ENCODE measurements at regions of chr17 and their contacts with region 1.

Region 1: DNA sequence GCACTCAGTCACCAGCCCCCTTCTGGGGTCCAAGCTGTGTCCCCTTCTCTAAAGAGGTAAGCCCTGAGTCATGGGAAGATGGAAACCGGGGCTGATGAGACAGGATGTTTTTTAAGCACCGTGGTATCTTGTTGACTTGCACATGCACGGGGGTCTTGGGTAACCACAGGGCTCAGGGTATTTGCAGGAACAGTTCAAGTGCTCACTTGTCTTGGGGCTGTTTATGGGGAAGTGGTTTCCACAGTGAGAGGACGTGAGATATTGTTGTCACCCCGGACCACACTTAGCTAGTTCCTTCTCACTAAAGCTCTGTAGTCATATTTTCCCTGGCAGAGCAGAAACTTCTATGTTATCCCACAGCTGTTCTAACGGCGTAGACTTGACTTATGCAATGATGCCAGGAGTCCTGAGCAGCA is 7.7 kb downstream of the CCL3L1 start:
- DNase-seq: peak in 3 of 5 donors; percentile 54 to 93 (median 72)
- H3K4me3 ChIP-seq: no peak overlapping the region
- H3K4me3 Mint-ChIP-seq: peak overlapping the region; percentile 56 to 99 (median 95)
- H3K27ac ChIP-seq: peak overlapping the region; percentile 61
- H3K27ac Mint-ChIP-seq: peak overlapping the region; percentile 71 to 100 (median 89)
- H3K4me1 ChIP-seq: peaks cover 35% of the 10 kb centered on the region
- H3K4me1 Mint-ChIP-seq: peaks cover 49 to 87% (median 86%) of the 10 kb centered on the region in 3 donors
- H3K27me3 ChIP-seq: no peaks in the 10 kb centered on the region
- H3K27me3 Mint-ChIP-seq: peaks cover 0 to 19% of the 10 kb centered on the region in 2 donors

Region 2: GRCh38 chr17:36198831-36199465 is 10.0 kb after region 1 on chr17:
- CTCF ChIA-PET with region 1: interaction called, 11 read pairs
- POLR2A ChIA-PET with region 1: interaction called, 130 read pairs
- DNase-seq: peak in 1 of 5 donors; percentile 69
- H3K4me3 ChIP-seq: no peak overlapping the region
- H3K4me3 Mint-ChIP-seq: peak overlapping the region; percentile 35 to 67 (median 61)
- H3K27ac ChIP-seq: peak overlapping the region; percentile 47
- H3K27ac Mint-ChIP-seq: peak overlapping the region; percentile 81 to 93 (median 89)
- H3K4me1 ChIP-seq: peaks cover 39% of the 10 kb centered on the region
- H3K4me1 Mint-ChIP-seq: peaks cover 69 to 98% (median 96%) of the 10 kb centered on the region in 3 donors
- H3K27me3 ChIP-seq: no peaks in the 10 kb centered on the region
- H3K27me3 Mint-ChIP-seq: peaks cover 0 to 3% of the 10 kb centered on the region in 2 donors

Region 3: GRCh38 chr17:36209575-36209974 is 20.7 kb after region 1 on chr17:
- CTCF ChIA-PET with region 1: interaction called, 12 read pairs
- POLR2A ChIA-PET with region 1: interaction called, 3 read pairs
- DNase-seq: no peak
- H3K4me3 ChIP-seq: no peak overlapping the region
- H3K4me3 Mint-ChIP-seq: peak overlapping the region in 1 of 7 donors; percentile 20
- H3K27ac ChIP-seq: no peak overlapping the region
- H3K27ac Mint-ChIP-seq: peak overlapping the region in 5 of 8 donors; percentile 42 to 99 (median 86)
- H3K4me1 ChIP-seq: peaks cover 38% of the 10 kb centered on the region
- H3K4me1 Mint-ChIP-seq: peaks cover 51 to 83% (median 75%) of the 10 kb centered on the region in 3 donors
- H3K27me3 ChIP-seq: no peaks in the 10 kb centered on the region
- H3K27me3 Mint-ChIP-seq: no peaks in the 10 kb centered on the region

Region 4: DNA sequence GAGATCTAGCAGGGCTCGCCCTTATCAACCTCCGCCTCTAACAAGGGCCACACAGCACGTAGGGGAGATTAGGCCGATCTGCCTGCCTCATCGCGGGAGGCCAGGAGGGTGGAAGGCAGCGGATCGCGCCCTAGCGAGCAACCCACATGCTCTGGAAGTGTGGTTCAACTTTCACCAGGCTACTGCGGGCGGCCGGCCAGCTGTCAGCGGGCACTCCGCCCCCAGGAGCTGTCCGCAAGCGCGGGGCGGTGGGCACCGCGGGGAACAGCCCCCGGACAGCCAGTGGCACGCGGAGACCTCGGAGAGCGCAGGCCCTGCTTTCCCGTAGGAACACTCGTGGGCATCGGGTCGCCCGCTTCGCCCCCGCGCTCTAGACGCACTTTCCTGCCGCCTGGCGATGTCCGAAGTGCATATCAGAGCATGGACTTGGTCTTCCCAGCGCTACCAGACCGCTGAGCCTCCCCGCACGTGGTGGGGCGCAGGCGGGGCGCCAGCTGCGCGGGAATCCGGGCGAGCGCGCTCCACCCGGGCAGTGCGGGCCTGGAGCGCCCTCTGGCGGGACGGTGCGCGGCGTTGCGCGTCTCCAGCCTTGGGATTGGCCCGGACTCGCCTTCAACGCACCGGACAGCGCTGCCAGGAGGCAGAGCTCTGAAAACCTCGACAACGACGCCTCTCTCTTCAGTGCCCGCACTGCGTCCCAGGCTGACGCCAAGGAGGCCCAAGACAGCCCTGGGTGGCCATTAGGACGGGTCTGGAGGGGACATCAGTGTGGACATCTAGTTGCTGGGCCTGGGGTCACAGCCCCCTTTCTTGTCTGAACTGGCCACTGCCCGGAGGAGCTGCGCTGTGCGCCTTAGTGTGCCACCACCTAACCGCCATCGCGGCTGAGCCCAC is 294.0 kb after region 1 on chr17:
- CTCF ChIA-PET with region 1: interaction called, 14 read pairs
- POLR2A ChIA-PET with region 1: interaction called, 6 read pairs
- DNase-seq: peak; percentile 69 to 78 (median 71)
- H3K4me3 ChIP-seq: peak overlapping the region; percentile 58
- H3K4me3 Mint-ChIP-seq: peak overlapping the region; percentile 66 to 78 (median 72)
- H3K27ac ChIP-seq: no peak overlapping the region
- H3K27ac Mint-ChIP-seq: no peak overlapping the region
- H3K4me1 ChIP-seq: peaks cover 20% of the 10 kb centered on the region
- H3K4me1 Mint-ChIP-seq: peaks cover 26 to 33% (median 29%) of the 10 kb centered on the region in 3 donors
- H3K27me3 ChIP-seq: peaks cover 7% of the 10 kb centered on the region
- H3K27me3 Mint-ChIP-seq: peaks cover 13 to 26% of the 10 kb centered on the region in 2 donors

Measured in CD8-positive, alpha-beta memory T cell (primary cell).